Esophagus muscularis mucosa (tissue), 4 donors: ENCODE measurements at regions of chr4 and their contacts with region 1.

Region 1: DNA sequence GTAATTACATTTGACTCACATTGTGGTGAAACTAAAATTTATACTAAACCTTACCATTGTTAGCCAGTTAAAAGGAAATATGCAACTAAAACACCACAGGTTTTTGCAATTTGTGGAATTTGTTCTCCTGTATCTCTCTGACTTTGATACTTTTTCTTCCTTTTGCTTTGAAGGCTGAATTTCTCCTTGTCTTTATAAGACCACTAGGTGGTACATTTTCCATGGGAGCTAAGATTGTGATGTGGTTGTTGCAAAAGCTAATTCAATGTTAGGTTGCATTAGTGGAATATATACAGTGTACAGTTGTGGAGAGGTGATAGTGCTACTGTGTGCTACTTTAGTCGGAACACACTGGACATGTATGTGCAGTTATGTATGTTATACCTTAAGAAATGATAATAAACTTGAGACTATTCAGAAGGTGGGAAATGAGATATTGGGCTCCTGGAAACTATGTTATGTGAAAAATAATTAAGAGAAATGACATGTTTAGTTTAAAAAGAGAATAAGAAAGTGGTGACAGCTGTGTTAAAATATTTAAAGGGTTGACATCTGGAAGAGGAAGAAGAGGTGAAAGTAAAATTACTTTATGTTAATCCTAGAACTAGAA is 70.3 kb downstream of the ARL9 start:
- DNase-seq: no peak
- H3K4me3 ChIP-seq: no peak overlapping the region
- H3K27ac ChIP-seq: no peak overlapping the region
- H3K4me1 ChIP-seq: no peaks in the 10 kb centered on the region
- H3K27me3 ChIP-seq: no peaks in the 10 kb centered on the region
- CTCF ChIP-seq: peak; percentile 40 to 52 (median 41)
- EP300 ChIP-seq: no peak
- POLR2A ChIP-seq: no peak

Region 2: GRCh38 chr4:56655209-56655626 is 79.3 kb after region 1 on chr4:
- intact Hi-C with region 1: loop called (anchors 5 kb)
- DNase-seq: no peak
- H3K4me3 ChIP-seq: peak overlapping the region; percentile 56 to 66 (median 56)
- H3K27ac ChIP-seq: peak overlapping the region in 3 of 4 donors; percentile 31 to 58 (median 56)
- H3K4me1 ChIP-seq: peaks cover 22 to 36% (median 30%) of the 10 kb centered on the region in 4 donors
- H3K27me3 ChIP-seq: peaks cover 0 to 63% (median 13%) of the 10 kb centered on the region in 4 donors
- CTCF ChIP-seq: no peak
- EP300 ChIP-seq: no peak
- POLR2A ChIP-seq: no peak

Region 3: GRCh38 chr4:56728512-56728911 is 152.6 kb after region 1 on chr4:
- intact Hi-C with region 1: no loop called
- DNase-seq: no peak
- H3K4me3 ChIP-seq: no peak overlapping the region
- H3K27ac ChIP-seq: peak overlapping the region; percentile 59 to 72 (median 66)
- H3K4me1 ChIP-seq: peaks cover 3 to 18% (median 10%) of the 10 kb centered on the region in 4 donors
- H3K27me3 ChIP-seq: no peaks in the 10 kb centered on the region
- CTCF ChIP-seq: no peak
- EP300 ChIP-seq: peak; percentile 81
- POLR2A ChIP-seq: no peak

Region 4: DNA sequence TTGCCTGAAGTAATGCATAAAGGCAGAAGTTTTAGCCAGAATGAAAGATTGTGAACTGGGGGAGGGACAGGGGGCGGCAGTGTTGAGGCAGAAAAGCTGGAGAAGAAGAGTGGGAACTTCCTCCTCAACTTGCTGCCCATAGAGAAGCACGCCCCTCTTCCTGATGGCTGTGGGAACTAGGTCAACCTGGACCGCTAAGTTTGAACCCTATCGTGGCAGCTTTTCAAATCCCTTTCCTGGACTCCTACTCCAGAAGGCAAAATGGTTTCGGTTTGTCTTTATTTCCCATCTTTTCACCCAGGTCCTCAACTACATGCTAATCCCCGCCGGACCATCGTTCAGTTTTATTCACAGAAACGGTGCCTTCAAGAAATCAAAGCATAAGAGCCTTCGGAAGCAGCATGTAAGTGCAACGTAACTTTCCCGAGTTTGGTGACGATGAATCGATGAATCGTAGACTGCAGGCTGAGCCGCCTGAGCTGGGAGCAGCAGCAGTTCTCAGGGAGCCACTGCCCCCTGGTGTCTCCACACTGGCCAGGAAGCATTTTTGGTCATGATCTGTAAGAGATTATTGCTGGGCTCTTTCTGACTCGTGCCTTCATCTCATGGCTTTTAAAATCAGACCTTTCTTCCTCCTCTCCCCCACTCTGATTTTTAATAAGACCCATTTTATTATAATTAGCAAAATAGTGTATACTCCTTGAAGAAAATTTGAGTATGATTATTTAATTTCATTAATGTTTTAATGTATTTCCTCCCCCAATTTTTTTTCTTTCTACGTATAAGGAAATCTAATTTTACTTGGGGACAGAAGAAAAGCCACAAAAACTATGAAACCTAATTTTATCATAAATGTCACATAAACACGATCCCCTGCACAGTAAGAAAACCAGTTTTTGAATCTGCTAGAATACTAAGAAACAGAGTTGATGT is 224.2 kb after region 1 on chr4:
- intact Hi-C with region 1: loop called (anchors 1 kb)
- DNase-seq: peak; percentile 94
- H3K4me3 ChIP-seq: peak overlapping the region; percentile 57 to 65 (median 59)
- H3K27ac ChIP-seq: peak overlapping the region; percentile 57 to 73 (median 70)
- H3K4me1 ChIP-seq: peaks cover 0 to 21% (median 20%) of the 10 kb centered on the region in 4 donors
- H3K27me3 ChIP-seq: no peaks in the 10 kb centered on the region
- CTCF ChIP-seq: peak; percentile 81 to 89 (median 87)
- EP300 ChIP-seq: no peak
- POLR2A ChIP-seq: no peak